ENCODE measurements at regions of chr1 and their contacts with region 1.

Region 1: DNA sequence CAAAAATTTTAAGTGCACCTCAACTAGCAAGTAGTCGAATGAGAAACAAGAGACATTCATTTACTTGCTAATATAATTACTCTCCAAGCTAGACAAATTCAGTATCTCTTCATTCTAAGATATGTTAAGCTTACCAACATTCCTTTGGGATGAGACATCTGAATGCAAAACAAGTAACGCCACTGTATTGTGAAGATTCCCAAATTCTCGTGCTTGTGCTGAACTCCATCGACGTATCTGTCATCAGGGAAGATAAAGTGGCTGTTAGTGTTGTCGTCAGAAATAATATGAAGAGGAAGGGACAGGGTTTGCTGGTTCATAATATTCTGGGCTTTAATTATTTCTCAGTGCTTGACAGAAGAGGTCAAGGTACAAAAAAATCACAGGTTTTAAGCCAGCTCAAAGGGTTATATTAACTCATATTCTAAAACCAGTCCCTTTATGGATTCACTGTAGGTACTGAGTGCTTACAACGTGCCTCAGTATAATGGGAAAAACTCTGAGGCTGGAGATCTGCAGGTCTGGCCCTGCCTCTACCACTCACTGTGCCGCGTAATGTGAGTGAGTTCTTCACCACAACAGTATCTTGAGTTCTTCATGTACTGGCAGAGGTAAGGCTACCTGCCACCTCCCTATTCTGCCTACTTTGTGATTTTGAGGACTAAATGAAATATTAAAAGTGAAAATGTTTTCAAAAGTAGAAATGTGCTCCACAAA is 42.0 kb downstream of the PCSK9 start:
- DNase-seq: no peak
- ATAC-seq: no peak
- H3K4me3 ChIP-seq: no peak overlapping the region
- H3K27ac ChIP-seq: no peak overlapping the region
- H3K4me1 ChIP-seq: no peaks in the 10 kb centered on the region
- H3K27me3 ChIP-seq: no peaks in the 10 kb centered on the region
- CTCF ChIP-seq: no peak
- EP300 ChIP-seq: no peak
- POLR2A ChIP-seq: no peak
- RAD21 ChIP-seq: no peak

Region 2: DNA sequence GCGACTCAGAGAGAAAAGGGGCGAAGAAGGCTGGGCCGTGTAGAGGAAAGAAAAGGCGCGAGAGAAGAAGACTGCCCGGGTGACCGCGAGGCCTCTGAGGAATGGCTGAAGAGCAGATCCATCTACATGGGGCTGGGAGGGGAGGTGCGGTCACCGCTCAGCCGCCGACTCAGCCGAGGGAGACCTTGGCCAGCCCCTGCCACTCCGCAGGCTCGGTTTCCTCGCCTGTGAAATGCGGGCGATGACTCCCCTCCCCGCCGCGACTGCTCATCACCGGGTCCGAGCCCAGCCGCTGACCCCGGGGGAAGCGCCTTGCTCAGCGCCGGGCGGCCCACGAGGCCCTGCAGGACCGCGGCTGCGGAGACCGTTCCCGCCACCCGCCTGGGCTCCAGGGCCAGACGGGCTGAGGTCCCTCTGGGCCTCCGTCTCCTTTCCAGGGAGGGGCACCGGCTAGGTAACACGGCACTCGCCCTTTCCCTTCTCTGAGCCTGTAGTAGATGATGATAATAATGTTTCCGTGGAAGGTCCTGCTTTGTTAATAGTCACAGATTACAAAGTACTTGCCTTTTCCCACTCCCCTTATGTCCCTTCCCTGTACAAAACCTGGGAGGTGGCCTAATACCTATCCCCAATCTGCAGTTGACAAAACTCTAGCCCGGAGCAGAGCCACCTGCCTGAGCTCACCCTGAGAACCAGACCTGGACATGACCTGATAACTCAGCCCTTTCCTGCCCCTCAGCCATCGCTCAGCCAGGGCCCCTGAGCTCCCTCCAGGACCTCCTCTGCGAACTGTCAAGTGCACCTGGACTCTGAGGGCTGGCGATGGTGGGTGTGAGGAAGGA is 84.3 kb before region 1 on chr1:
- CTCF ChIA-PET with region 1: no interaction called
- POLR2A ChIA-PET with region 1: no interaction called
- in situ Hi-C with region 1: no loop called
- intact Hi-C with region 1: no loop called
- DNase-seq: no peak
- ATAC-seq: no peak
- H3K4me3 ChIP-seq: no peak overlapping the region
- H3K27ac ChIP-seq: no peak overlapping the region
- H3K4me1 ChIP-seq: peaks cover 15% of the 10 kb centered on the region
- H3K27me3 ChIP-seq: peaks cover 0 to 44% of the 10 kb centered on the region in 2 experiments; a peak in 4 of 5 replicates
- CTCF ChIP-seq: no peak
- EP300 ChIP-seq: no peak
- POLR2A ChIP-seq: no peak
- RAD21 ChIP-seq: no peak

Region 3: DNA sequence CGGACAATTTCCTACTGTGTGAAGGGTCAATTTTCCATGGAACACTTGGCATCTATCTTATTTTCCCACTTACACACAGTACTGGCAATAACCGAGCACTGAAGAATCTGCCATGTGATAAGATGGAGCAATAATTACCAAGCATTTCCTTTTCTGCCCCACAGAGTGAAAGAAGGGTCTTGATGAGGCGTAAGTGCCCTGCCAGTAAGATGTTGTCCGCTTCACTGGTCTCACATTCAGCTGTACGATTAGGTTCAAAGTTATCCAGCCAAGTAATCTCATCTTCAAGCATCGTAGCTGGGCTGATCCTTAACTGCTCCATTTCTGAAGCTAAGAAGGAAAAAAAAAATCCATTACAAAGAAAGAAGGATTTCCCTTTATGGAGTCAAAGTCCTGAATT is 25.8 kb after region 1 on chr1:
- CTCF ChIA-PET with region 1: no interaction called
- POLR2A ChIA-PET with region 1: no interaction called
- in situ Hi-C with region 1: no loop called
- intact Hi-C with region 1: no loop called
- DNase-seq: no peak
- ATAC-seq: no peak
- H3K4me3 ChIP-seq: no peak overlapping the region
- H3K27ac ChIP-seq: no peak overlapping the region
- H3K4me1 ChIP-seq: no peaks in the 10 kb centered on the region
- H3K27me3 ChIP-seq: no peaks in the 10 kb centered on the region
- CTCF ChIP-seq: no peak
- EP300 ChIP-seq: no peak
- POLR2A ChIP-seq: no peak
- RAD21 ChIP-seq: no peak

Region 4: DNA sequence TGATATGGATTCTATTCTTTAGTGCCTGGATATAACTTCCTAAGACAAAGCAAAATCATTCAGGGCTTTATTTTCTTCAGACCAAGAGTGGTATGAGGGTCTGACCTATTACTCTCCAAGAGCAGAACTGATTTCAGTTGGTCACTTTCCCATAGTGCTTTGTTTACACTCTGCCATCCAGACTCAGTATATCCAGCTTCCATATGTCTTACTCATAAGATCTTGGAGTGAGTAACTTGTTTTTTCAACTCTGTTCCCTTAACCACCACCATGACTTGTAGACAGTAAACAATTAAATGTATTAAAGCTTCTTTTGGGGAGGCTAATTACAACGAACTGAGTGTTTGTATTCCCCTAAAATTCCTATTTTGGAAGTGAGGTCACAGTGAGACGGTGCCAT is 50.5 kb after region 1 on chr1:
- CTCF ChIA-PET with region 1: no interaction called
- POLR2A ChIA-PET with region 1: no interaction called
- in situ Hi-C with region 1: no loop called
- intact Hi-C with region 1: loop called (anchors 10 kb)
- DNase-seq: no peak
- ATAC-seq: no peak
- H3K4me3 ChIP-seq: no peak overlapping the region
- H3K27ac ChIP-seq: no peak overlapping the region
- H3K4me1 ChIP-seq: peaks cover 16% of the 10 kb centered on the region
- H3K27me3 ChIP-seq: no peaks in the 10 kb centered on the region
- CTCF ChIP-seq: no peak
- EP300 ChIP-seq: no peak
- POLR2A ChIP-seq: no peak
- RAD21 ChIP-seq: no peak

Measured in HepG2 (cell line).